ENCODE measurements at regions of chr2 and their contacts with region 1.

Region 1: DNA sequence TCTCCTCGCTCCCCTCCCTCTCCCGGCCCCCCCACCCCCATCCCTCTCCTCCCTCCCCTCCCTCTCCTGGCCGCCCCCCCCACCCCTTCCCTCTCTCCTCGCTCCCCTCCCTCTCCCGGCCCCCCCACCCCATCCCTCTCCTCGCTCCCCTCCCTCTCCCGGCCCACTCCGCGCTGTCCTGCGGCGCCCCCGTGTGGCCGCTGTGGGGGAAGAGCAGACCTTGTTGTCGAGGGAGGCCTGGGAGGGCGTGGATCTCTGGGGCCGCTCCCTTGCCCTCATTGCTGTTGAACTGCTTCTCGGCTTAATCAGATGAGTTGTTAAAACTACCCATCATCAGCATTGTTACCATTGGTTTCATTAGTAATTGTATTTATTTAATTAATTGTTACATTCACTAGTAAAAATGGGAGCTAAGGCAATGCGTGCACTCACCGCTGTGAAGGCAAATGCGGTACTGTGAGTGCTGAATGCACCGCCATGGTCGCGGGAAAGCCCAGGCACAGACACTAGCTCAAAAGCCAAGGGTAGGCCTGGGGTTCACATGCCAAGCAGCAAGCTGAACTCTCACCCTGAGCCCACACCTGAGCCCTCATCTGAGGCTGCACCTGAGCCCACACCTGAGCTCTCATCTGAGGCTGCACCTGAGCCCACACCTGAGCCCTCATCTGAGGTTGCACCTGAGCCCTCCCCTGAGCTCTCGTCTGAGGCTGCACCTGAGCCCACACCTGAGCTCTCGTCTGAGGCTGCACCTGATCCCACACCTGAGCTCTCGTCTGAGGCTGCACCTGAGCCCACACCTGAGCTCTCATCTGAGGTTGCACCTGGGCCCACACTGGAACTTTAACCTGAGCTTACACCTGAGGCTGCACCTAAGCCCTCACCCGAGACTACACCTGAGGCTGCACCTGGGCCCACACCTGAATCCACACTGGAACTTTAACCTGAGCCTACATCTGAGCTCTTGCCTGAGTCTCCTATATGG is 8.8 kb downstream of the RTP5 start:
- DNase-seq: peak; percentile 59 to 82
- ATAC-seq: peak in 5 of 8 donors; percentile 19 to 52 (median 41)
- H3K4me3 ChIP-seq: no peak overlapping the region
- H3K27ac ChIP-seq: no peak overlapping the region
- H3K4me1 ChIP-seq: peaks cover 3 to 26% (median 15%) of the 10 kb centered on the region in 9 donors
- H3K27me3 ChIP-seq: no peaks in the 10 kb centered on the region
- CTCF ChIP-seq: peak; percentile 44 to 71 (median 66)

Region 2: DNA sequence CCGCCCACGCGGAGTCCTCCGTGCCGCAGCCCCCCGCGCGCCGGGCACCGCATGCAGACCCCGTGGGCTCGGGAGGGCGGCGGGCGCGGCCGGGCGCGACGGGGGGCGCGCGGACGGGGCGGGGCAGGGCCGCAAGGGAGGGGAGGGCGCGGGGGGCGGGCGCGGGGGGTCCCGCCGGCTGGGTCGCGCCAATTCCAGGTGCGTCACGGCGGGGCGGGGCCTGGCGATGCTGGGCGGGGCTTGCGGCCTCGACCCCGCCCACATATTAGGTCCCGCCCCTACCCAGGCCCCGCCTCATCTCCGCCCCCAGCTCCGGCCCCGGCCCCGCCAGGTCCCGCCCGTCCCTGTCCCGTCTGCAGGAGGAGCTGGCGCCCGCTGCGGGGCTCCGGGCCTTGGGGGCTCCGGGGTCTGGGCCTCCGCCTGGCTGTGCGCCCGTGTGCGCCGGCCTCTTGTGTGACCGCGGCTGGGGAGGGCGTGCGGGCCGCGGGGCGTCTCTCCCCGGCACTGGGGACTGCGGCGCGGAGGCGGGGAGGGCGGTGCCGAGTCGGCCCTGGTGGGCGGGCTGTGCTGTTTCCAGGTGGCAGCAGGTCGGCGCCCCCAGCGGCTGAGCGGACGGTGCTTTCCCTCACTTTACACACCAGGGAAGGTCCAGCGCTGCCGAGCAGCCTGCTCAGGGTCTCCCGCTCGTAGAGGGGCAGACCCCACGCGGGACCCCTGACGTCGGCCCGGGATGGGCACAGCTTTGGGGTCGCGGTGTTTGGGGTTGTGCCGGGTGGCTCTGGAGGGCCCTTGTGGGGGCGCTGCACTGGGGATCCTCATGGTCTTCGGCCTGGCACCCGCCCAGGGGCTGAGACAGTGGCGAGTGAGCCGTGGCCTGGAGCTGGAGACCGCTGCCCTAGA is 175.9 kb before region 1 on chr2:
- intact Hi-C with region 1: loop called in 1 of 10 experiments (anchors 5 kb)
- DNase-seq: peak; percentile 76 to 88
- ATAC-seq: peak; percentile 89 to 94 (median 92)
- H3K4me3 ChIP-seq: peak overlapping the region; percentile 64 to 94 (median 81)
- H3K27ac ChIP-seq: peak overlapping the region; percentile 85 to 95 (median 89)
- H3K4me1 ChIP-seq: peaks cover 3 to 27% (median 19%) of the 10 kb centered on the region in 9 donors
- H3K27me3 ChIP-seq: no peaks in the 10 kb centered on the region
- CTCF ChIP-seq: peak in 7 of 9 donors; percentile 31 to 68 (median 42)

Region 3: DNA sequence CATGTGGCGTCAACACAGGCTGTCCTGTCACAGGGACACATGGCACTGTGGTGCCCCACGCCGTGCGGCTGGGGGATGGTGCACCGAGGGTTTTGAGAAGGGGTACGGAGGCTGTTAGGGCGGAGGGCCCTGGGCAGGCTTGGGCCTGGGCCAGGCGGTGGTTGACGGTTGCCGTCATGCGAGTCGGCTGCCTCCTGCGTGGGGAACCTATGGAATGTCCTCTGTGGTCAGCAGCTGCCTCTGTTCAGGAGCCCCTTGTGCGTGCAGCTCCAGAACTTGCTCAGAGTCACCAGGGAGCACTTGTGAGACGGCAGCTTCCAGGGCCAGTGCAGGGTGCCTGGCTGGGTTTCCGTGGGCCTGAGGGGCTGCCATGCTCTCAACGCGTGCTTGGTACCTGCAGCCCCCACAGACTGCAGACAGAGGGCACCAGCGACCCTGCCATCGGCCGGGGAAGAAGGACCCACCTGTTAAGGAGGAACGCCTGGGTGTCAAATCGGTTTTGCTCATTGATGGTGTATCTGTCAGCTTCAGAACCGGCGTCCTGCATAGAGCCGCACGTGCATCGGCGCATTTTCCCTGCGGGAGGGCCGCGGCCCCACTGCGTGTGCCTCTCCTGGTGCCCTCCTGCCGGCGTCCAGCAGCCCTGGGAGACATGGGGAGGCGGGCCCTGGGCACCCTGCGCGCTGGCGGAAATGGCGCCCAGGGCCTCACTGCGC is 153.9 kb before region 1 on chr2:
- intact Hi-C with region 1: loop called in 3 of 10 experiments (anchors 5 to 10 kb)
- DNase-seq: no peak
- ATAC-seq: no peak
- H3K4me3 ChIP-seq: no peak overlapping the region
- H3K27ac ChIP-seq: no peak overlapping the region
- H3K4me1 ChIP-seq: peaks cover 0 to 12% (median 0%) of the 10 kb centered on the region in 9 donors
- H3K27me3 ChIP-seq: no peaks in the 10 kb centered on the region
- CTCF ChIP-seq: peak in 7 of 9 donors; percentile 20 to 53 (median 38)

Region 4: GRCh38 chr2:241986836-241987641 is 108.8 kb after region 1 on chr2:
- intact Hi-C with region 1: no loop called
- DNase-seq: no peak
- ATAC-seq: no peak
- H3K4me3 ChIP-seq: no peak overlapping the region
- H3K27ac ChIP-seq: no peak overlapping the region
- H3K4me1 ChIP-seq: no peaks in the 10 kb centered on the region
- H3K27me3 ChIP-seq: no peaks in the 10 kb centered on the region
- CTCF ChIP-seq: no peak

Measured in heart right ventricle (tissue), 16 donors.